Naive thymus-derived CD4-positive, alpha-beta T cell (primary cell): ENCODE measurements at regions of chr5 and their contacts with region 1.

Region 1: GRCh38 chr5:127229185-127229889 is 61.3 kb upstream of the MEGF10 start:
- DNase-seq: peak; percentile 28 to 68 (median 64)
- ATAC-seq: peak; percentile 83
- H3K4me3 ChIP-seq: peak overlapping the region; percentile 66
- H3K4me3 Mint-ChIP-seq: peak overlapping the region; percentile 73 to 88 (median 80)
- H3K27ac ChIP-seq: peak overlapping the region; percentile 62
- H3K27ac Mint-ChIP-seq: peak overlapping the region; percentile 36 to 88 (median 84)
- H3K4me1 ChIP-seq: peaks cover 0 to 15% of the 10 kb centered on the region in 2 donors
- H3K4me1 Mint-ChIP-seq: peaks cover 7 to 28% (median 18%) of the 10 kb centered on the region in 7 donors
- H3K27me3 ChIP-seq: no peaks in the 10 kb centered on the region
- H3K27me3 Mint-ChIP-seq: peaks cover 0 to 5% (median 0%) of the 10 kb centered on the region in 5 donors

Region 2: GRCh38 chr5:126846344-126846743 is 383.0 kb before region 1 on chr5:
- CTCF ChIA-PET with region 1: no interaction called
- POLR2A ChIA-PET with region 1: interaction called, 7 read pairs
- intact Hi-C with region 1: loop called (anchors 1 to 10 kb)
- DNase-seq: no peak
- ATAC-seq: no peak
- H3K4me3 ChIP-seq: peak overlapping the region; percentile 27
- H3K4me3 Mint-ChIP-seq: peak overlapping the region in 7 of 10 donors; percentile 42 to 73 (median 59)
- H3K27ac ChIP-seq: peak overlapping the region; percentile 66
- H3K27ac Mint-ChIP-seq: peak overlapping the region; percentile 27 to 98 (median 94)
- H3K4me1 ChIP-seq: peaks cover 3 to 23% of the 10 kb centered on the region in 2 donors
- H3K4me1 Mint-ChIP-seq: peaks cover 18 to 61% (median 51%) of the 10 kb centered on the region in 7 donors
- H3K27me3 ChIP-seq: no peaks in the 10 kb centered on the region
- H3K27me3 Mint-ChIP-seq: no peaks in the 10 kb centered on the region

Region 3: DNA sequence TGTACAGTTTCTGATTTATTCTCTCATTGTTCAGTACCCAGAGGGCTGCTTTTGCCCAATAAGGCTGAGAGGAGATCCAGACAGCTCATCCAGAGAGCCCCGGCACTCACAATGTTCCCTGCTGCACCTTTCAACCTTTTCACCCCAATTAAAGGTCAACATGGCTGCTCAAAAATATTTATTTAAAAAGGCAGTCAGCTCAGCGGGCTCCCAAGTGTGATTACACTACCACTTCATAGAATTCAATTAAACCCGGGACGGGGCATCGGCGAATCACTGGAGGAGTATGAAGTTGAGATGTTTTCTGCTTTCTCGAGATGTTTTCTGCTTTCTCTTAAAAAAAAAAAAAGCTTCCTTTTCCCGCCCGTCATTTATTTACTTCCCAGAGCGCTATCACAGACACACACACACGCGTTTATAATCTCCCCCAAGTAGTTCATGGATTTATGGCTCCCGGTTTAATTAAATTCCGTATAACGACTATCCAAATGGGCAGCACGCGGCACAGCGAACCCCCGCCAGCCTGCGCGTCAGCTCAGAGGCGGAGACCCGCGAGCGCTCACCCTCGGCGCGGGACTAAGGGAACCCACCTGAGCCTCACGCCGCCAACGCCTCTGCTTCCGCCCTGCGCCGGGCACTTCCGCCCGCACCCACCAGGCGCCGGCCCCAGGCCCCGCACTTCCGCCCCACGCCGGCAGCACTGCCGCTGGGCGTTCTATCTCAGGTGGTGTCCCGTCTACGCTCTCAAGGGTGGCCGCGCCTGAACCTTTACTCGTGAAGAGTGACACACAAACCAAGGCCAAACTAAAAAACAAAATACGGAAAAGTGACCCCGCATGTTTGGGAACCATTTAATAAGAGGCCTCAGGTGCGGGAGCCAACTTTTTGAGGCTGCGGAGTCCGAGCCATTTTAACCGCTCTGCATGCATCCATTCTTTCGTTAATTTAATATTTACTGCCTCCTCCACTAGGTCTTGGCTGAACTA is 156.2 kb before region 1 on chr5 and contains the start of gene C5orf63:
- CTCF ChIA-PET with region 1: no interaction called
- POLR2A ChIA-PET with region 1: interaction called, 18 read pairs
- intact Hi-C with region 1: loop called in 1 of 2 experiments (anchors 1 kb)
- DNase-seq: peak; percentile 41 to 78 (median 69)
- ATAC-seq: peak; percentile 91
- H3K4me3 ChIP-seq: peak within 1 kb of the TSS; percentile 83
- H3K4me3 Mint-ChIP-seq: peak within 1 kb of the TSS; percentile 89 to 100 (median 92)
- H3K27ac ChIP-seq: peak within 1 kb of the TSS; percentile 69
- H3K27ac Mint-ChIP-seq: peak within 1 kb of the TSS; percentile 74 to 98 (median 93)
- H3K4me1 ChIP-seq: peaks cover 8 to 10% of the 10 kb centered on the region in 2 donors
- H3K4me1 Mint-ChIP-seq: peaks cover 17 to 39% (median 29%) of the 10 kb centered on the region in 7 donors
- H3K27me3 ChIP-seq: no peaks in the 10 kb centered on the region
- H3K27me3 Mint-ChIP-seq: no peaks in the 10 kb centered on the region
- total RNA-seq, gene C5orf63: 9.2 to 20.7 (median 11.9) TPM

Region 4: GRCh38 chr5:127517480-127518318 is 288.4 kb after region 1 on chr5 and contains the start of gene PRRC1:
- CTCF ChIA-PET with region 1: no interaction called
- POLR2A ChIA-PET with region 1: no interaction called
- intact Hi-C with region 1: loop called in 1 of 2 experiments (anchors 2 kb)
- DNase-seq: peak; percentile 63 to 80 (median 74)
- ATAC-seq: peak; percentile 99
- H3K4me3 ChIP-seq: peak within 1 kb of the TSS; percentile 94
- H3K4me3 Mint-ChIP-seq: peak within 1 kb of the TSS; percentile 87 to 92 (median 89)
- H3K27ac ChIP-seq: peak within 1 kb of the TSS; percentile 89
- H3K27ac Mint-ChIP-seq: peak within 1 kb of the TSS; percentile 48 to 91 (median 82)
- H3K4me1 ChIP-seq: peaks cover 0 to 18% of the 10 kb centered on the region in 2 donors
- H3K4me1 Mint-ChIP-seq: peaks cover 25 to 48% (median 38%) of the 10 kb centered on the region in 7 donors
- H3K27me3 ChIP-seq: no peaks in the 10 kb centered on the region
- H3K27me3 Mint-ChIP-seq: peaks cover under 1 to 7% (median 6%) of the 10 kb centered on the region in 5 donors
- total RNA-seq, gene PRRC1: 34.6 to 56.6 (median 49.4) TPM